Dorsolateral prefrontal cortex (tissue), 120 donors: ENCODE measurements at regions of chr6 and their contacts with region 1.

Region 1: DNA sequence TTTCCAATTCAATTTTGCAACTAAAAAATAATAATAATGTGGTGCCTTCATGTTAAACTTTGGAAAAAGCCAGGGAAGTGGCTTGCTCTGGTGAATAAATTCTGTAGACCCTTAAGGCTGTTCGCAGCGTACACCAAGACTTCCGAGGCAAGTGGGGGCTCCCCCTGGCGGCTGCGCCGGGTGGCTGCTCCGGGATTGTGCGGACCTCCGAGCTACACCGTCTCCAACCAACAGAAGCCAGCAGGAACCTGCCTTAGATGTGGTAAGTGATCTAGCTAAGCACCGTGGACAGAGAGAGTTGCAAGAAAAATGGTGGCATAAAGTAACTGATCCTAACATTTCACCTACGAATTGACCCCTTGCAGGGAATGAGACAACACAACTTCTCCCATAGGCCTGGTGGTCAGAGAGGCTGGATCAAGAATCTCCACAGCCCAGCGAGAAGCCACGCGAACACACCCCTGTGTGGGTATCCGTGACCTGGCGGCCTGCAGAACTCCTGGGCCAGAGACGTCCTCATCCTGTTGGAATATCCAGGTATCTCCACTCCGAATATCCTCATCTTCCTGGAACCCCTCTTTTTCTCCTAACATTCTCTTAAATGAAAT is 69.6 kb downstream of the TBXT start:
- DNase-seq: peak in 9 of 10 donors; percentile 54 to 83 (median 78)
- H3K4me3 ChIP-seq: peak overlapping the region in 47 of 59 donors; percentile 10 to 63 (median 39)
- H3K27ac ChIP-seq: peak overlapping the region in 9 of 59 donors; percentile 6 to 66 (median 42)
- H3K27me3 ChIP-seq: peaks cover 0 to 14% (median 0%) of the 10 kb centered on the region in 45 donors
- CTCF ChIP-seq: peak; percentile 57 to 90 (median 81)

Region 2: DNA sequence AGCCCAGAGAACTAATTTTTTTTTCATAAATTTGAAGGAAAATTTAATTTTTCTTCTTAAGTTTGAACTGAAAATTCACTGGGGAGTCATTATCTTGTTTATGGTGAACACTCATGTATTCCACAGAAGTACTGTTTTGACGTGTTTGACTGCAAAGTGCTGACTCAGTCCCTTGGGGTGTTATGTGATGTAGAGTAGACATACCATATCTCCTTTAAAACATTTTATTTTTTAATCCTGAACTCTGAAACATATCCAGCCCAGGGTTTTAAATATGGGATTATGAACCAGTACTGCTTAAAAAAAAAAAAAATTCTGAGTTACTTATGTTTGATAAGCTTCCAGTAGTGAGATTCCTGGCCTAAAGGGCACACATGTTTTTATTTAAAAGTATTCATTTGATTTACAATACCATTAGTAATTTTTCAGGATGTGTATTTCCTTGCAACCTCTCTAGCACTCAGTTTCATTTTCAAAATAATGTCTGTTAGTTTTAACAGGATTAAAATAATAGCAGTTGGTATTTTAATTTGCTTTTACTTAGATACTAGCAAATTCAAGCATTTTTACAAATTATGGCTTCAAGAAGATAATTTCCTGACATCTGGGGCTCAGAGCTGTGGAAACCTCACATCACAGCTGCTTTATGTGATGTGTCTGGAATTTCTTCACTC is 353.3 kb before region 1 on chr6:
- intact Hi-C with region 1: no loop called
- DNase-seq: no peak
- H3K4me3 ChIP-seq: no peak overlapping the region
- H3K27ac ChIP-seq: no peak overlapping the region
- H3K27me3 ChIP-seq: no peaks in the 10 kb centered on the region
- CTCF ChIP-seq: no peak

Region 3: GRCh38 chr6:166005944-166006899 is 91.8 kb before region 1 on chr6:
- intact Hi-C with region 1: loop called in 1 of 2 experiments (anchors 10 kb)
- DNase-seq: peak in 8 of 10 donors; percentile 52 to 80 (median 74)
- H3K4me3 ChIP-seq: peak overlapping the region; percentile 26 to 75 (median 55)
- H3K27ac ChIP-seq: peak overlapping the region in 50 of 59 donors; percentile 8 to 91 (median 72)
- H3K27me3 ChIP-seq: peaks cover 0 to 46% (median 13%) of the 10 kb centered on the region in 45 donors
- CTCF ChIP-seq: no peak